ENCODE measurements at regions of chr20 and their contacts with region 1.

Region 1: DNA sequence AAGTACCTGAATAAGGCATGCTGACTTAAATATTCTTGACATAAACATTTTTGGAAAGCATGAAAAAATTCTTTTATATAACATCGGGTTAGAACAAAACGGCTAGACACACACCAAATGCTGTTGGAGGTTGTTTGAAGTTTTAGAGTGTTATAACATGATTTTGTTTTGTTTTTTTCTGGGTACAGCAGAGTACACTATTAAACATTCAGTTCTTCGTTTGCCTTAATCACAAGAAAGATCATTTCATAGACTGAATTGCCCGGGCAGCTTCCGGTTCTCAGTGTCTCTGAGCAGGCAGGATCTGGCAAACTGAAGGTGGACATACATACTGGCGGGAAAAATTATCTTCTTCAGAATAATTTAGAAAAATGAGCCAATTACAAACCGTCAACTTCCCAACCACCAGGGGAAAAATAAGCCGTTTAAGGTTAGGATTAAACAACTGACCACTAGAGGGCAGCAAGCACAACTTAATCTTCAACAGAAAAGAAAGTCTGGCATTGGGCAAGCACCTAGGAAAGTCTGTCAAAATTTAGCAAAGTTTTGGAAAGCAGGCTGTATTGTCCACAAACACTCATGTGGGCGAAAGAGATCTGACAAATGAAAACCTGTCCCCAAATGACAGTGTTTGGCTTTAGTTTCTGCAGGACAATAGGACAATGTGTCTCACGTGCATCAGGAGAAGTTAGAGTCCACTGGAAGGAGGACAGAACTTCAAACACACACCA is 15.0 kb downstream of the ZNF217 start:
- DNase-seq: peak; percentile 51
- H3K4me3 ChIP-seq: peak overlapping the region in 1 of 4 donors; percentile 24
- H3K27ac ChIP-seq: peak overlapping the region; percentile 81 to 91 (median 86)
- H3K4me1 ChIP-seq: peaks cover 38 to 69% (median 48%) of the 10 kb centered on the region in 4 donors
- H3K27me3 ChIP-seq: no peaks in the 10 kb centered on the region
- CTCF ChIP-seq: peak; percentile 88 to 100 (median 91)
- EP300 ChIP-seq: no peak
- POLR2A ChIP-seq: no peak

Region 2: DNA sequence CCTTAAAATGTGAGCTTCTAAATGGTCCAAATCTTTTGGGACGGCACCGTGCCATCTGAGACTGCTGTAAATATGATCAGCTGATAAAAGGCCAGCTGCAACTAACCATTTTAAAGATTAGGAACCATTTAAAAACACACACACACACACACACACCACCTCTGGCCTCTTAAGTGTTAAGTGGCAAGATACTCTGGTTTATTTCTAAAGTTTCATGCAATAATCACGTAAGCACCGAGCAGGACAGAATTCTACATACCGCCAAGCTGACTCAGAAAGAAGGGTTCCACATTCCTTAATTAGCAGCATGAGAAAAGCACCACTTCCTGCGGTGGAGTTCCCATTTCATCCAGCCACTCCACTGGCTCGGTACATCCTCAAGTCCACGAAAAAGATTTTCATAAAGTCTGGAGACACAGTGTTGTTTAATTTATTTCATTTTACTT is 32.8 kb after region 1 on chr20:
- in situ Hi-C with region 1: no loop called
- intact Hi-C with region 1: no loop called
- DNase-seq: peak; percentile 37
- H3K4me3 ChIP-seq: no peak overlapping the region
- H3K27ac ChIP-seq: peak overlapping the region; percentile 27 to 76 (median 55)
- H3K4me1 ChIP-seq: peaks cover 0 to 33% (median 7%) of the 10 kb centered on the region in 4 donors
- H3K27me3 ChIP-seq: no peaks in the 10 kb centered on the region
- CTCF ChIP-seq: no peak
- EP300 ChIP-seq: no peak
- POLR2A ChIP-seq: no peak

Region 3: GRCh38 chr20:53869466-53870258 is 291.0 kb after region 1 on chr20:
- in situ Hi-C with region 1: no loop called
- intact Hi-C with region 1: loop called (anchors 5 kb)
- DNase-seq: peak; percentile 84
- H3K4me3 ChIP-seq: no peak overlapping the region
- H3K27ac ChIP-seq: peak overlapping the region; percentile 79 to 87 (median 82)
- H3K4me1 ChIP-seq: peaks cover 38 to 83% (median 64%) of the 10 kb centered on the region in 4 donors
- H3K27me3 ChIP-seq: no peaks in the 10 kb centered on the region
- CTCF ChIP-seq: peak; percentile 73 to 95 (median 76)
- EP300 ChIP-seq: no peak
- POLR2A ChIP-seq: no peak

Region 4: DNA sequence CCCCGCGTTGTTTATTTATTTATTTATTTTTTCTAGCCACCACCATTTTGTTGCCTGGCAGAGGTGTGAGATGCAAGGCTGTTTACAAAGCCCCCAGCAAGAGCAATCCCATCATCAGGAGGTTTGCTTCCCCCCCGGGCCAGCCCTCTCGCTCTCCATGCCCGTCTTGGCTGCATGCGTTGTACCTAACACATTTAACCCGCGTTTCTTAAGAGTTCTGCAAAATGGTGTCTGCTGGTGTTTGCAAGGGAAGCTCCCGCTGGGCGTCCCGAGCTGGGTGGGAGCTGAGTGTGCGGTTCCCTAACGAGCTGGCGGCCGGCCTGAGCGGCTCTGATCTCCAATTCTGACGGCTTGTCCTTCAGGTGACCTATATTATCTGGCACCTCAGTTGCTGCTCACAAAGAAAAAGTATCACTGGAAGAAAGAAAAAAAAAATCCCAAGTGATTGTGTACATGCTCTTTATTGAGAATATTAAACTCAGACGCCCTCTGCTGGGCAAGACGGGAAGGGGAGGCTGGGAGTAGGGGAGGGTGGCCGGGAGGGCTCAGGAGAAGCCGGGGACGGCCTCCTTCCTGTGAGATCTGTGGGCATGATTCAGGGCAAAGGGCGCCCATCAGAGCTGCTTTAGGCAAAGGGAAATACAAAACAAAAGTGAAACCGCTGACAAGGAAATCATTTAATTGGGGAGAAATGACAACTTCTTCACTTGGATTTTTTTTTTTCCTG is 337.0 kb after region 1 on chr20:
- in situ Hi-C with region 1: loop called in 2 of 4 experiments (anchors 5 to 25 kb)
- intact Hi-C with region 1: loop called (anchors 2 kb)
- DNase-seq: peak; percentile 99
- H3K4me3 ChIP-seq: peak overlapping the region; percentile 46 to 71 (median 46)
- H3K27ac ChIP-seq: peak overlapping the region; percentile 92 to 95 (median 92)
- H3K4me1 ChIP-seq: peaks cover 28 to 37% (median 33%) of the 10 kb centered on the region in 4 donors
- H3K27me3 ChIP-seq: no peaks in the 10 kb centered on the region
- CTCF ChIP-seq: peak; percentile 91 to 98 (median 93)
- EP300 ChIP-seq: no peak
- POLR2A ChIP-seq: no peak

Region 5: DNA sequence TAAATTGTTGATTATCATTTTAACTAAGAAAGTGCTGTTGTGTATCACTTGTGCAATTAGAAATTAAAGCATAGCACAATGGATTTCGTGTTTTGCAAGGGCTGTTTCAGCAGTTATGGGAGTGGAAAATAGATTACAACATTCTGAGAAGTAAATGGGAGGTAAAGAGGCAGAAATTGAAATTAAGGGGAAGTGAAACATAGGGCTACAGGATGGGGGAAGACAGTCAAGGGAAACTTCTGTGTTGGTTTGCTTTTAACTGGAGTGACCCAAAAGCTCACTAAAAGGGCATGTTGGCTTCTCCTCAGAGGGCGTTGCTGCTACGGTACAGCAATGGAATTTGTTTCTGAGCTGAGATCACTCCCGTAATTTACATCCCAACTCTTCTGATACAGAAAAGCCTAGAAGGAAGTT is 344.3 kb after region 1 on chr20:
- in situ Hi-C with region 1: loop called in 2 of 4 experiments (anchors 5 to 25 kb)
- intact Hi-C with region 1: no loop called
- DNase-seq: peak; percentile 29
- H3K4me3 ChIP-seq: no peak overlapping the region
- H3K27ac ChIP-seq: peak overlapping the region; percentile 23 to 62 (median 46)
- H3K4me1 ChIP-seq: peaks cover 7 to 25% (median 14%) of the 10 kb centered on the region in 4 donors
- H3K27me3 ChIP-seq: no peaks in the 10 kb centered on the region
- CTCF ChIP-seq: no peak
- EP300 ChIP-seq: no peak
- POLR2A ChIP-seq: no peak

Region 6: GRCh38 chr20:53939572-53940359 is 361.1 kb after region 1 on chr20:
- in situ Hi-C with region 1: loop called in 2 of 4 experiments (anchors 5 to 10 kb)
- intact Hi-C with region 1: no loop called
- DNase-seq: peak; percentile 97
- H3K4me3 ChIP-seq: no peak overlapping the region
- H3K27ac ChIP-seq: peak overlapping the region; percentile 70 to 79 (median 76)
- H3K4me1 ChIP-seq: peaks cover 6 to 53% (median 24%) of the 10 kb centered on the region in 4 donors
- H3K27me3 ChIP-seq: no peaks in the 10 kb centered on the region
- CTCF ChIP-seq: peak; percentile 60 to 82 (median 67)
- EP300 ChIP-seq: no peak
- POLR2A ChIP-seq: no peak

Region 7: DNA sequence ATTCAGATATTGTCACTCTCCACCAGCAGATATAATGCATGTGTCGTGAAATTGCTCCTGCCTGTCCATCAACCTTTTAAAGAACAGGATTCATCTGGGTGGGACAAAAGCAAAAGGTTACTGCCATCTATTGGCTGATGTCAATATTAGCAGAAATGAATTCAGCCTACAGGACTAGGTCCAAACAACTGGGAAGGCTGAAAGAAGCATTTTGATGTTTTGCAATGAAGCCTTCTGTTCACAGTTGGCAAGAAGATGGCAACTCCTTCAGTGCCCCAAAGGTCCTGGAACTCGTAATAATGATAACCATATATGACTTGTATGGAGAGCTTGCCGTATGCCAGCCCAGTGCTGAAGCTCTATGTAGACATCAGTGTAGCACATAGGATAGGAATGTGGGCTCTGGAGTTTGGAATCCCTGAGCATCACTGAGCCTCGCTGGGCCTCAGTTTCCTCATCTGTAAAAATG is 484.2 kb after region 1 on chr20:
- in situ Hi-C with region 1: loop called in 3 of 4 experiments (anchors 10 to 25 kb)
- intact Hi-C with region 1: no loop called
- DNase-seq: no peak
- H3K4me3 ChIP-seq: no peak overlapping the region
- H3K27ac ChIP-seq: no peak overlapping the region
- H3K4me1 ChIP-seq: peaks cover 0 to 20% (median 9%) of the 10 kb centered on the region in 4 donors
- H3K27me3 ChIP-seq: no peaks in the 10 kb centered on the region
- CTCF ChIP-seq: peak; percentile 41 to 59 (median 52)
- EP300 ChIP-seq: no peak
- POLR2A ChIP-seq: no peak